Activated T-helper 1 cell treated with anti-CD3 and anti-CD28 coated beads, Interleukin-12 subunit alpha, Interleukin-12 subunit beta, Interleukin-2, Interleukin-4 antibody, amounts not matched to agents 30 ng/mL and 10 ng/mL and 1 ng/mL, durations not matched to agents 14 hours and 24 hours and 36 hours (primary cell): ENCODE measurements at regions of chr4 and their contacts with region 1.

Region 1: GRCh38 chr4:186144142-186144955 is 39.8 kb downstream of the FAM149A start:
- DNase-seq: no peak
- H3K4me3 Mint-ChIP-seq: peak overlapping the region; percentile 76
- H3K27ac Mint-ChIP-seq: no peak overlapping the region
- H3K4me1 Mint-ChIP-seq: peaks cover 13% of the 10 kb centered on the region
- H3K27me3 Mint-ChIP-seq: peaks cover 50% of the 10 kb centered on the region

Region 2: DNA sequence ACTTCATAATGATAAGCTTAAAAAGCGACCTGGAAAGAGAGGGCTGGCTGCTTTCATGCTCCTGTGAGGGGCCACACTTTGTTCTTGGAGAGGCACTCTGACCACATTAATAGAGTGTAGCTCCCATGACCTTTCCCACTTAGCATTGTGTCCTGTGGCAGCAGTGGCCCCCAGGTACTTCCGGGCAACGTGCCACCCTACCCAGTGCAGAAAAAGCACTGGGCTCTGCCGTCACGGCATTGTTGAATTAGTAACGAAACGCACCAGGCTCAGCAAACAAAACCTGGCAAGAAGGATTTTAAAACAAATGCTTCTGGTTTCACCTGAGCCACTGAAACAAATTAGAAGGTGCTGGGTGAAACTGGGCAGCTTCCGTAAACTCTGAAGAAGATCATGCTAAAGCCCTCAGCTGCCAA is 326.9 kb before region 1 on chr4:
- intact Hi-C with region 1: no loop called
- DNase-seq: no peak
- H3K4me3 Mint-ChIP-seq: no peak overlapping the region
- H3K27ac Mint-ChIP-seq: no peak overlapping the region
- H3K4me1 Mint-ChIP-seq: no peaks in the 10 kb centered on the region
- H3K27me3 Mint-ChIP-seq: no peaks in the 10 kb centered on the region

Region 3: GRCh38 chr4:186161138-186161537 is 16.8 kb after region 1 on chr4:
- intact Hi-C with region 1: loop called (anchors 2 kb)
- DNase-seq: peak; percentile 31
- H3K4me3 Mint-ChIP-seq: peak overlapping the region; percentile 72
- H3K27ac Mint-ChIP-seq: peak overlapping the region; percentile 24
- H3K4me1 Mint-ChIP-seq: no peaks in the 10 kb centered on the region
- H3K27me3 Mint-ChIP-seq: peaks cover 1% of the 10 kb centered on the region